Sigmoid colon (tissue), 7 donors: ENCODE measurements at regions of chr2 and their contacts with region 1.

Region 1: DNA sequence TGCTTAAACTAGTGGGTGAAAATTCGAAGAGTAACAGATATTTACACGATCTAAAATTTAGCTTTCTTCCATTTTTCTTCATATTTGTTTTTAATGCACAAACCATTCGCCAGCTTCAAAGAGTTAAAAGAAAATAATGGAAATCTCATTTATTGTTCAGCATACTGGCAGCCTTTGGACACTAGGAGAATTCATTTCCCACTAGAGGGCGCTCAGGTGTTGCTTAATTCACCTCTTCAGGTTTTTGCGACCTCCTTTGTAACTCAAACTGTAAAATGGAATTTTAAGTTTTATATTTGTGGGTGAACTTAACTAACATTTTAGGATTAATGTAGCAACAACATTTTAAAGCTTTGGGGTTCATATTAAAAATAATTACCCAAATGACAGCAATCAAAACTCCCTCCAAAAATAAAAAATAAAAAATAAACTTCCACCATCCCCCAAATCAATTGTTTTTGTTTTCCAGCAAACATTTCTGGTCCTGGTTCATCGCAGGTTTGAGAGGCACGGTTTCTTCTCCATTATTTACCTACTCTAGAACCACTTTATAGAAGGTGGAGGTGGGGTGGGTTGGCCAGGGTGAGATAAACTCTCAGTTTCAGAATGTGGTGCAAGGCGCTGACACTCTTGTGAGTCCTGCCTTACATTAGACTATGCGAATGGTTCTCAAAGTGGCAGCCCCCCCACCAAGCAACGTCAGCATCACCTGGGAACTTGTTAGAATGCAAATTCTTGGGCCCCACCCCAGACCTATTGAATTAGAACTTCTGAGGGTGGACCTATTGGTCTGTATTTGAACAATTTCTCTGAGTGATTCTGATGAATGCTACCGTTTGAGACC is 24.7 kb upstream of the PNPT1 start:
- DNase-seq: no peak
- H3K4me3 ChIP-seq: no peak overlapping the region
- H3K27ac ChIP-seq: no peak overlapping the region
- H3K4me1 ChIP-seq: no peaks in the 10 kb centered on the region
- H3K27me3 ChIP-seq: no peaks in the 10 kb centered on the region
- CTCF ChIP-seq: peak; percentile 24 to 67 (median 60)
- EP300 ChIP-seq: no peak
- POLR2A ChIP-seq: no peak

Region 2: GRCh38 chr2:55809875-55810621 is 91.7 kb after region 1 on chr2:
- intact Hi-C with region 1: no loop called
- DNase-seq: peak; percentile 76
- H3K4me3 ChIP-seq: no peak overlapping the region
- H3K27ac ChIP-seq: no peak overlapping the region
- H3K4me1 ChIP-seq: no peaks in the 10 kb centered on the region
- H3K27me3 ChIP-seq: no peaks in the 10 kb centered on the region
- CTCF ChIP-seq: no peak
- EP300 ChIP-seq: no peak
- POLR2A ChIP-seq: no peak

Region 3: DNA sequence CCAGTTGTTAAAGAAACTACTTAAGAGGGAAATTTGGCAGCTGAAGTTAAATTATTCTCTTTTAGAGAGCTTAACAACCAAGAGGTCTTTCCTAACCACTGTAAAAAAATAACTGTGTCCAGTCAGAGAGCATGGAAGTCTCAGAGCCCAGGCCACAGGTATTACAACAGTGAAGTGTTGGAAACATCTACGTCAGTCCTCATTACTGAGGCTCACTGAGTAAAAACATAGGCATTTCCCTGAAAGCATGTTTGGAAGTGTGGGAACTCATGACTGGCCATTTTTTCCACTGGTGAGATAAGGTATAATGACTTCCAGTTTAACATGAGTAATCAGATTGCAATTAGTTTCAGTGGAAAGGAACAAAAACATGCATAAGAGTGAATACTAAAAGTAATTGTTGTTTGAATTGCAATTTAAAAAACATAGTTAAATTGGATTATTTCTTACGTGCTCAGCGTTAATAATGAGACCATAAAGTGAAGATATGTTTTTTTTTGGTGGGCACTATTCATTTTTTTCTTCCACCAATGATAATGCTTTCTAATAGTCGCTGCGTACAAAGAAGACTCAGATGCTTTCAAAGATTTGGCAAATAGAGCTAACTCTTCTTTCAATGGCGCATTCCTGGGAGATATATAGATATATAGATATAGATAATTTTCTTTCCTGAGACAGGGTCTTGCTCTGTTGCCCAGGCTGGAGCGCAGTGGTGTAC is 144.4 kb after region 1 on chr2:
- intact Hi-C with region 1: no loop called
- DNase-seq: peak; percentile 74
- H3K4me3 ChIP-seq: no peak overlapping the region
- H3K27ac ChIP-seq: peak overlapping the region in 3 of 4 donors; percentile 45 to 66 (median 63)
- H3K4me1 ChIP-seq: peaks cover 0 to 13% (median 0%) of the 10 kb centered on the region in 4 donors
- H3K27me3 ChIP-seq: no peaks in the 10 kb centered on the region
- CTCF ChIP-seq: no peak
- EP300 ChIP-seq: peak in 1 of 4 donors; percentile 58
- POLR2A ChIP-seq: no peak

Region 4: DNA sequence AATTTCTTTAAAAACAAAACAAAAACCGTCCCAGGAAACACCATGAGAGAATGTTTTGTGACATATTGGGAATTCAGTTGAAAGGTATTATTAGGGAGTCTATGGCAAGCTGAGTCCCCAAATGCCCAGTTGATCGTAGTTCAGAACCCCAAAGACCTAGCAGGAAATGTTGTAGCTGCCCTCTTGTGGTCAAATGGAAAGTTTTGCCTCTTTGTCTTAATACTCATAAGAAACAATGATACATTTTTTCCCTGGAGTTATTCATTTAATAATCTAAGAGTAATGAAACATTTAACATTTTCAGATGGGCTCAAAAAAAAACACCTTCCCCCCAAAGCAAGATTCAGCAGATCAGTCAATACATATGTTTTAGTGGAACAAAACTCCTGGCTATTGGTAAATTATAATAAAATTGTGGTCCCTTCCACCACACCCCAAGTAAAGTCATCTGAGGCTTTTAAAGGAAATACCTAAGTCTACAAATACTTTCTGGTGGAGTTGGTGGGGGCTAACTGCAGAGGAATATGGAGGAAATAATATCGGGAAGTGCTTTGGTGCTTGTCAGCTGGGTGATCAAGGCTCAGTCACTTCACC is 243.0 kb after region 1 on chr2:
- intact Hi-C with region 1: loop called (anchors 10 kb)
- DNase-seq: no peak
- H3K4me3 ChIP-seq: no peak overlapping the region
- H3K27ac ChIP-seq: no peak overlapping the region
- H3K4me1 ChIP-seq: peaks cover 0 to 12% (median 0%) of the 10 kb centered on the region in 4 donors
- H3K27me3 ChIP-seq: no peaks in the 10 kb centered on the region
- CTCF ChIP-seq: peak in 2 of 4 experiments; percentile 31 to 46
- EP300 ChIP-seq: no peak
- POLR2A ChIP-seq: no peak

Region 5: DNA sequence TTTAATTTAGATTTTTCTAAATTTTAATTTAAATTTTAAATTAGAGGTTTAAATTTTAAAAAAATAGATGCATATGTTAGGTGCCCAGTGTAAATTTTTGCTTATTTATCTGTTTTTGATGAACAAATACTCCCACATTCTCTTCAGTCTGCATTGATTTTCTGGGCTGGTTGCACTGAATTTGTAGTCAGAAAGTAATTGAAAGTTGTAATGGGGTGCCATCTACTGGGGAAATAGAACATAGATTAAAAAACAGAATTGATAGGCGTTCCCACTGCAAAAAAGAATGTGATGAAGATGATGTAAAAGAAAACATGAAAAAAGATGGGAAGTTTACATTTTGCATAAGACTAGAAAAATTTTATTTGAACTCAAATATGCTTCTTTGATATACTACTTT is 413.8 kb after region 1 on chr2:
- intact Hi-C with region 1: loop called (anchors 5 kb)
- DNase-seq: no peak
- H3K4me3 ChIP-seq: no peak overlapping the region
- H3K27ac ChIP-seq: no peak overlapping the region
- H3K4me1 ChIP-seq: no peaks in the 10 kb centered on the region
- H3K27me3 ChIP-seq: no peaks in the 10 kb centered on the region
- CTCF ChIP-seq: peak in 1 of 4 experiments; percentile 26
- EP300 ChIP-seq: no peak
- POLR2A ChIP-seq: no peak